SK-N-SH (cell line): ENCODE measurements at regions of chr5 and their contacts with region 1.

Region 1: DNA sequence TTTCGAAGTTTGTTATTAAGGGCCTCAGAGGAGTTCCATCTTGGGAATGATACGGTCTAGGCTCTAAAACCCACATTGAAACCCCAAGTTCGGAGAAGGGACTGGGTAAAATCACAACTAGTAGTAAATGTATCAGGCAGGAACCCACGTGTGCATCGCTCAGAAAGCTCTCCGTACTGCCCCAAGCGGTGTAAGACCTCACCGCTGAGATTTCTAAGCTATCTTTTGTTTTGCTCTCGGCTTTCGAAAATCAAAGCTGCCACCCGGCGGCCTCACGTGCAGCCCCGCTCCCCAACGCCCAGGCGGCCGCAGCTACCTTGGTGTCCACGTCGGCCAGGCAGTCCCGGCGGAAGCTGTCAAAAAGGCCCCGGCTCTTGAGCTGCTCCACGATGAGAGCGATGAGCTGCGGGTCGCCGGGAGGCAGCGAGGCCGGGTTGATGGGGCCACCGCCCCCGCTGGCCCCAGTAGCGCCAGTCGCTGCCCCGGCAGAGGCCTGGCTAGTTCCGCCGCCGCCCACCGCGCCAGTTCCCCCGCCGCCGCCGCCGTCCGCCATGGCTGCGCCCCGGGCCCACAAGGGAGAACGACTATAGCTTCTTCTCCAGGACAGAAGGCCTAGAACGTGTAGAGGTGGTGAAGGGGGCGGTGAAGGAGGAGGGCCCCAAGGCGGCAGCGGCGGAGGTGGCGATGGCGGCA is 420 bp downstream of the BOD1 start:
- DNase-seq: peak; percentile 72
- H3K4me3 ChIP-seq: peak overlapping the region; percentile 91 to 96
- H3K27ac ChIP-seq: peak overlapping the region; percentile 81 to 88
- H3K4me1 ChIP-seq: peaks cover 13 to 24% of the 10 kb centered on the region in 2 experiments; a peak in 3 of 4 replicates
- H3K27me3 ChIP-seq: no peaks in the 10 kb centered on the region
- CTCF ChIP-seq: peak; percentile 68
- EP300 ChIP-seq: no peak
- RAD21 ChIP-seq: peak; percentile 37

Region 2: GRCh38 chr5:173472141-173472543 is 143.9 kb before region 1 on chr5:
- CTCF ChIA-PET with region 1: no interaction called
- POLR2A ChIA-PET with region 1: no interaction called
- DNase-seq: no peak
- H3K4me3 ChIP-seq: no peak overlapping the region
- H3K27ac ChIP-seq: peak overlapping the region in 1 of 2 experiments; percentile 82; a peak in 2 of 4 replicates
- H3K4me1 ChIP-seq: peaks cover 0 to 13% of the 10 kb centered on the region in 2 experiments; a peak in 2 of 4 replicates
- H3K27me3 ChIP-seq: no peaks in the 10 kb centered on the region
- CTCF ChIP-seq: no peak
- EP300 ChIP-seq: peak in 1 of 2 experiments; percentile 48; a peak in 1 of 4 replicates
- RAD21 ChIP-seq: no peak

Region 3: GRCh38 chr5:173515517-173515916 is 100.5 kb before region 1 on chr5:
- CTCF ChIA-PET with region 1: no interaction called
- POLR2A ChIA-PET with region 1: no interaction called
- DNase-seq: no peak
- H3K4me3 ChIP-seq: no peak overlapping the region
- H3K27ac ChIP-seq: no peak overlapping the region
- H3K4me1 ChIP-seq: no peaks in the 10 kb centered on the region; a peak in 1 of 4 replicates
- H3K27me3 ChIP-seq: no peaks in the 10 kb centered on the region; the same call in 1 of the 2 replicates
- CTCF ChIP-seq: no peak
- EP300 ChIP-seq: no peak
- RAD21 ChIP-seq: no peak

Region 4: GRCh38 chr5:173547579-173547978 is 68.5 kb before region 1 on chr5:
- CTCF ChIA-PET with region 1: no interaction called
- POLR2A ChIA-PET with region 1: no interaction called
- DNase-seq: no peak
- H3K4me3 ChIP-seq: no peak overlapping the region
- H3K27ac ChIP-seq: no peak overlapping the region
- H3K4me1 ChIP-seq: no peaks in the 10 kb centered on the region
- H3K27me3 ChIP-seq: peaks cover 7% of the 10 kb centered on the region; the same call in 1 of the 2 replicates
- CTCF ChIP-seq: no peak
- EP300 ChIP-seq: no peak
- RAD21 ChIP-seq: no peak

Region 5: GRCh38 chr5:173604141-173604540 is 11.9 kb before region 1 on chr5:
- CTCF ChIA-PET with region 1: interaction called, 17 read pairs
- POLR2A ChIA-PET with region 1: no interaction called
- DNase-seq: no peak
- H3K4me3 ChIP-seq: no peak overlapping the region
- H3K27ac ChIP-seq: no peak overlapping the region
- H3K4me1 ChIP-seq: no peaks in the 10 kb centered on the region
- H3K27me3 ChIP-seq: no peaks in the 10 kb centered on the region
- CTCF ChIP-seq: no peak
- EP300 ChIP-seq: no peak
- RAD21 ChIP-seq: no peak

Region 6: DNA sequence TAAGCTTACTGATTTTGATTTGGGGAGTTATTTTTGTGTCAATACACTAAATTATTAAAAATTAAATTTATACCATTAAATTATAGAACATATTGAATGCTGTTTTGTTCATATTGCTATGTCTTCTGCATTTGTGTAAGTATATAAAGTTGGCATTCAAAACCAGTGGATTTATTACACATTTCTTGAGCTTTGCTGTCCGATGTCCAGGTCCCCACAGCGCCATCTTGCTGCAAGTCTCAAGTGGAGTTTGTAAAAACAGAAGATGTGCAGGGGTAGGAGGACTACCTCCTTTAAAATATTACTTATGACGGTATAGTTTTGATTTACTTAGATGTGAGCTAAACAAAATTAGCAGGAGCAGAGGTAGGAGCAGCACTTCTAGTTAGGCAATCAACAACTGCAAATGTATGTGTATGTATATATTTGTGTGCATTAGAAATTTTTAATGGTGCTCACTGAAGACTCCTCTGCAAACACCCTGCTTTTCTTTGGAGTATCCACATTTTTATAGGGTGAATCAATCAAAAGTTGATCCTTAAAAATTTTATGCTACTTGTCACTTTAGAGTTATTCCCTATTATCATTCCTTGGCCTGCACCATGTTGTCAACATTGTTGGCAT is 309.5 kb after region 1 on chr5:
- CTCF ChIA-PET with region 1: interaction called, 11 read pairs
- POLR2A ChIA-PET with region 1: no interaction called
- DNase-seq: no peak
- H3K4me3 ChIP-seq: peak overlapping the region in 1 of 2 experiments; percentile 28; a peak in 1 of 4 replicates
- H3K27ac ChIP-seq: no peak overlapping the region
- H3K4me1 ChIP-seq: peaks cover 6 to 23% of the 10 kb centered on the region in 2 experiments
- H3K27me3 ChIP-seq: no peaks in the 10 kb centered on the region
- CTCF ChIP-seq: peak; percentile 67
- EP300 ChIP-seq: no peak
- RAD21 ChIP-seq: peak; percentile 77

Region 7: DNA sequence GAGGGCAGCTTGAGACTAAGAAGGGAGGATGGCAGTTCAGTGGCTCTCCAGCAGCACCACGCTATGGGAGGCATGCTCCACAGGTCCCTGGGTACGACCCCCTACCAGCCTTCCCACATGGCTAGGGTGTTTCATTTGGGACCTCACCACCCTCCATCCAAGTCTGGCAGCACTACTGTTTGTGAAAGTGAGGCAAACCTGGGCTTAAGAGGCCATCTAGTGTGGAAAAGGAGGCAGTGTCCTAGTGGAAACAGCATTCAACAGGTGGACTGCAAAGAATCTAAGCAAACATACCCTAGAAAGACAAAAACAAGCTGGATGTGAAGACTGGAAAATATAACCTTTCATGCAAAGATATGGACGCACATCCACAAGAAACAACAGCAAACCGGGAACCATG is 368.2 kb after region 1 on chr5:
- CTCF ChIA-PET with region 1: interaction called, 21 read pairs
- POLR2A ChIA-PET with region 1: no interaction called
- DNase-seq: peak; percentile 46
- H3K4me3 ChIP-seq: peak overlapping the region in 1 of 2 experiments; percentile 12; a peak in 1 of 4 replicates
- H3K27ac ChIP-seq: no peak overlapping the region
- H3K4me1 ChIP-seq: no peaks in the 10 kb centered on the region
- H3K27me3 ChIP-seq: peaks cover 15% of the 10 kb centered on the region; the same call in 1 of the 2 replicates
- CTCF ChIP-seq: peak; percentile 35; the same call in 1 of the 2 replicates
- EP300 ChIP-seq: no peak
- RAD21 ChIP-seq: peak; percentile 66